Posterior vena cava (tissue), 2 donors: ENCODE measurements at regions of chr4 and their contacts with region 1.

Region 1: DNA sequence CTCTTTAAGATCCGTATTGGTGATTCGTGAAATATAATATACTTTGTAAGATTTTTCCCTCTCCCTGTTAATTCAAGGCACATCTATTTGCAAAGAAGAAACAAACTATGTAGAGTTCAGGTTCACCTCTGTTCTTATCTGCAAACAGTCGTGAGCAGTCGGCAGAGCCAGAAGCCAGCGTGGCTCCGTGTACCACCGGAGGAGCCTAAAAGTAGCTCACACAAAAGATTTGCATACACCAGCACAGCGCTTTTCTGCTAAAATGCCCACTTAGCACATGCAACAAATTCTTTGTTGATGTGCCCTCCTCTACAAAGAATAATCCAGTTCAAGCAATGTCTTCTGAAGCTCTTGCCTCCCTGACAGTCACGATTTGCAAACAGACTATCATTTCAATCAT is 416.0 kb upstream of the TENM3 start:
- DNase-seq: no peak

Region 2: GRCh38 chr4:181372014-181372413 is 455.2 kb before region 1 on chr4:
- intact Hi-C with region 1: no loop called
- DNase-seq: no peak

Region 3: GRCh38 chr4:181807771-181808170 is 19.5 kb before region 1 on chr4:
- intact Hi-C with region 1: loop called in 1 of 2 experiments (anchors 1 kb)
- DNase-seq: no peak